ENCODE measurements at regions of chr9 and their contacts with region 1.

Region 1: GRCh38 chr9:91727316-91727861 is 222.6 kb downstream of the ROR2 start:
- DNase-seq: peak in 3 of 9 experiments; percentile 17 to 57 (median 52)
- ATAC-seq: peak; percentile 55
- H3K4me3 ChIP-seq: no peak overlapping the region
- H3K4me3 Mint-ChIP-seq: no peak overlapping the region
- H3K27ac ChIP-seq: no peak overlapping the region
- H3K27ac Mint-ChIP-seq: no peak overlapping the region
- H3K4me1 ChIP-seq: no peaks in the 10 kb centered on the region
- H3K4me1 Mint-ChIP-seq: no peaks in the 10 kb centered on the region
- H3K27me3 ChIP-seq: no peaks in the 10 kb centered on the region
- H3K27me3 Mint-ChIP-seq: peaks cover 7% of the 10 kb centered on the region
- CTCF ChIP-seq: peak; percentile 55

Region 2: DNA sequence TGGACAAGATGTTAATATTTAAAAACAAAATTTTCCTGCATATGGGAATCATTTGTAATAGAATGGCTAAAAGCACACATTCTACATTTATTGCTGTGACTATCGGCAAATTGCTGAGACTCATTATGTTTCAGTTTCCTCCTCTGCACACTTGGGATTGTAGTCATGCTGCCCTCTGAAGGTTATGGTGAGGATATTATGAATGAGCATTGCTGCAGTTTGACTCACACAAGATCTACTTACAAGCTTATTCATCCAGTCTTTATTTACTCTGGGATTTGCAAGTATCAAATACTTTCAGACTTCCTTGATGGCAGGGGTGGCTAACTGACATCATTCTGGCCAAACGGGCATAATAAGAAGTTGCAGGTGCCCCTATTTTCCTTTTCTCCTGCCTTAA is 294.2 kb before region 1 on chr9:
- CTCF ChIA-PET with region 1: no interaction called
- POLR2A ChIA-PET with region 1: no interaction called
- intact Hi-C with region 1: loop called in 1 of 2 experiments (anchors 10 kb)
- DNase-seq: peak in 2 of 9 experiments; percentile 54 to 64
- ATAC-seq: peak; percentile 36
- H3K4me3 ChIP-seq: no peak overlapping the region
- H3K4me3 Mint-ChIP-seq: no peak overlapping the region
- H3K27ac ChIP-seq: no peak overlapping the region
- H3K27ac Mint-ChIP-seq: no peak overlapping the region
- H3K4me1 ChIP-seq: no peaks in the 10 kb centered on the region
- H3K4me1 Mint-ChIP-seq: peaks cover 2% of the 10 kb centered on the region
- H3K27me3 ChIP-seq: no peaks in the 10 kb centered on the region
- H3K27me3 Mint-ChIP-seq: peaks cover 2% of the 10 kb centered on the region
- CTCF ChIP-seq: peak; percentile 25

Region 3: GRCh38 chr9:91659529-91660495 is 67.6 kb before region 1 on chr9:
- CTCF ChIA-PET with region 1: interaction called, 3 read pairs
- POLR2A ChIA-PET with region 1: no interaction called
- intact Hi-C with region 1: loop called (anchors 1 to 2 kb)
- DNase-seq: peak in 2 of 9 experiments; percentile 9 to 18
- ATAC-seq: no peak
- H3K4me3 ChIP-seq: no peak overlapping the region
- H3K4me3 Mint-ChIP-seq: no peak overlapping the region
- H3K27ac ChIP-seq: no peak overlapping the region
- H3K27ac Mint-ChIP-seq: no peak overlapping the region
- H3K4me1 ChIP-seq: no peaks in the 10 kb centered on the region
- H3K4me1 Mint-ChIP-seq: no peaks in the 10 kb centered on the region
- H3K27me3 ChIP-seq: no peaks in the 10 kb centered on the region
- H3K27me3 Mint-ChIP-seq: peaks cover 10% of the 10 kb centered on the region
- CTCF ChIP-seq: no peak

Region 4: DNA sequence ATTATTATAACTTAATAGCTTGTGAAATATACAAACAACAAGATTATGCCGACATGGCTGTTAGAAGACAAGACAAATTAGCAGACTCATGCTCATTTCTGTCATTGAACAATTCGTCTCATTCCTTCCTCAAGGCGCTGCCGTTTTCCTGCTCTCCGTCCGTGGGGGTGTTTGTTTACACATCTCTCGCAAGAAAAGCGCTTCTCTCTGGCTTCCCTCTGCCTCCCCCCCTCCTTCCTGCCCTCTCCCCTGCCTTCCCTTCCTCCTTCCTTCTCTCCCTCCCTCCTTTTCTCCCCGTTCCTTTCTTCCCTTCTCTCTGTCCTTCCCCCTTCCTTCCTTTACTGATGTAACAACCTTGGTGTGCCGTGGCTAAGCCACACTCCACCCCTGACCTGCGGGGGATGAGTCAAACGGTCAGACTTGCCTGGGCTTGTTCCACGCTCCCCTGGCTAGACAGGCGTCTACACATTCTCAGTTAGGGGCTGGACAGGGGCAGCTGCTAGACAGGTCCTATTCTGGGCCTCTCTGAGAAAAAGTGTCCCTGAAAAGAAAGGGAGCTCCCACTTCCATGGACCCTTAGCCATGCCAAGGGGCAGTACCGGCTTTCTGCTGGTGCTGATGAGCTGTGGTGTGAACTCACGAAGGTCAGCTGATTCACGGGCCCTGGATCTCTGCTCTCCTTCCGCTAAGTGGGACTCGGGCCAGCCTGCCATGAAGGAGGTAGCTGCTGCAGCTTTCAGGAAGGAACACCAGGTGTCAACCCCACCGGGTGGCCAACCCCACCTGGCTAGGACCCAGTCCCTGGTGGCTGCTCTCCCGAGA is 419.9 kb after region 1 on chr9:
- CTCF ChIA-PET with region 1: no interaction called
- POLR2A ChIA-PET with region 1: no interaction called
- intact Hi-C with region 1: no loop called
- DNase-seq: no peak
- ATAC-seq: no peak
- H3K4me3 ChIP-seq: no peak overlapping the region
- H3K4me3 Mint-ChIP-seq: no peak overlapping the region
- H3K27ac ChIP-seq: no peak overlapping the region
- H3K27ac Mint-ChIP-seq: no peak overlapping the region
- H3K4me1 ChIP-seq: no peaks in the 10 kb centered on the region
- H3K4me1 Mint-ChIP-seq: no peaks in the 10 kb centered on the region
- H3K27me3 ChIP-seq: peaks cover 3% of the 10 kb centered on the region in 2 experiments
- H3K27me3 Mint-ChIP-seq: peaks cover 39% of the 10 kb centered on the region
- CTCF ChIP-seq: no peak

Measured in CD8-positive, alpha-beta T cell (primary cell).